ENCODE measurements at regions of chr14 and their contacts with region 1.

Region 1: GRCh38 chr14:54691525-54692283 is 124.8 kb downstream of the SAMD4A start:
- DNase-seq: peak; percentile 80
- H3K4me3 Mint-ChIP-seq: no peak overlapping the region
- H3K27ac Mint-ChIP-seq: no peak overlapping the region
- H3K4me1 Mint-ChIP-seq: peaks cover 15% of the 10 kb centered on the region
- H3K27me3 Mint-ChIP-seq: no peaks in the 10 kb centered on the region

Region 2: DNA sequence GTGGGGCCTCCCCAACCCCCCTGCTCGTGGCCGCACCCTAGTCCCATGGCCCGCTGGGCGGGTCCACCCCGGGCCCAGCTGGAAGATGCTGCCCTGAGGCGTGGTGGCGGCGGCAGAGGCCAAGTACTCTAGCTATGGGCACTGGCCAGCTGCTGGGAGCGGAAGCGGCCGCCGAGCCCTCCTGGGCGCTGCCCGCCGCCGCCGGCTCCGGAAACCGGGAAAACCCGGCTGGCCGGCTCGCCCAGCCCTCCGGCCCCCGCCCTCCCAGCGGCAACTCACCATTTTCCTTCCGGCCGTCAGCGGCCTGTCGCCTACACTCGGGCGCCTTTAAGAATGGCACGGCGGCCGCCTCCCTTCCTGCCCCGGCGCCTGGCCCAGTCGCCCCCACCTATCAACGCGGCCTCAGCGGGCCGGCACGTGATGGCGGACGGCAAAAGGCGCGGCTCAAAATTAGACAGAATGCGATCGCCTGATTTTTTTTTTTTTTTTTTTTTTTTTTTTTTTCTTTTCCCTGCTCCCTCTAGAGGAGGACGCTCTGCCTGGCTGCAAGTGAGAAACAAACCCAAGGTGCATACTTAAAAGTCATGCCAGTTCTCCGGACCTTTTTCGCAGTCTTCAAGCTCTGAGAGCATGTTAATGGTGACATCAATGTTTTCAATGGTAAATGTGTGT is 202.9 kb before region 1 on chr14 and contains the start of gene GMFB:
- CTCF ChIA-PET with region 1: no interaction called
- intact Hi-C with region 1: no loop called
- DNase-seq: peak; percentile 91
- H3K4me3 Mint-ChIP-seq: peak within 1 kb of the TSS; percentile 85
- H3K27ac Mint-ChIP-seq: peak within 1 kb of the TSS; percentile 88
- H3K4me1 Mint-ChIP-seq: peaks cover 54% of the 10 kb centered on the region
- H3K27me3 Mint-ChIP-seq: no peaks in the 10 kb centered on the region
- total RNA-seq, gene GMFB: 29.5 to 33.4 TPM

Region 3: GRCh38 chr14:54572316-54572715 is 119.4 kb before region 1 on chr14:
- CTCF ChIA-PET with region 1: interaction called, 17 read pairs
- intact Hi-C with region 1: loop called (anchors 1 kb)
- DNase-seq: peak; percentile 49
- H3K4me3 Mint-ChIP-seq: no peak overlapping the region
- H3K27ac Mint-ChIP-seq: no peak overlapping the region
- H3K4me1 Mint-ChIP-seq: peaks cover 19% of the 10 kb centered on the region
- H3K27me3 Mint-ChIP-seq: peaks cover 3% of the 10 kb centered on the region

Region 4: DNA sequence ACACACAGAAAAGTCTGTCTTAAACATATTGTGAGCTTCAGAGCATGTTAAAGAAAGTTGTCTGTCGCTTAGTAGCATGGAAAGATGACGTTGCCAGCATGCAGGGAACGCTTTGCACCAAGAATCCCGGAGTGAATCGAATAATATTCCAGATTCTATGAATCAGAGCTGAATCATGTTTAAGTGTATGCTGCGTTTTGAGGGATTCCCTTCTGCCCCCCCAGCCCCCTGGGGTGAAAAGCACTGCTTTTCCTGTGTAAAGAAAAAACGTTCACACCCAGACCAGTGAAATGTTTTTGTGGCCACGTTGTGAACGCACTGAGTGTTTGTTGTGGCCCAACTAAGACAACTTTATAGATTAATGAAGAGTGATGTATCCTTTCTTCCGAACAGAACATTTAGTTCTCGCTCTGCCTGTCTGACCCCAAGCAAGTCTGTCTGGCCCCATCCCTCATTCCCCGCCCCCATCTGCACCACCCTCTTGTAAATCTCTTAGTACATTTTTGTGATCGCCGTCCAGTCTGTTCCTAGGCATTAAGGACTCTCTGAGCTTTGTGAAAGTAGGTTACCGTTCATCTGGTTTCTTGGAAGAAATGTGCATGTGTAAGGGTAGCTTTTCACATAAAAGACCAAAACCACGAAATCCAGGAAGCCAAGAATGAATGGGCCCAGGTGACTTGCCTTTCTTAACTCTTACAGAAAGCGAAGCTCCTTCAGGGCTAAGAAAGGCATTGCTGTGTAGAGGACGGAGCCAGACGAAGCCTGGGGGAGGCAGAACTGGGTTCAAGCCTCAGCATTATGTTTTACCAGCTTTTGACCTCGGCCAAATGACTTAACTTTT is 21.8 kb before region 1 on chr14:
- CTCF ChIA-PET with region 1: interaction called, 9 read pairs
- intact Hi-C with region 1: loop called (anchors 2 kb)
- DNase-seq: peak; percentile 51
- H3K4me3 Mint-ChIP-seq: no peak overlapping the region
- H3K27ac Mint-ChIP-seq: no peak overlapping the region
- H3K4me1 Mint-ChIP-seq: peaks cover 30% of the 10 kb centered on the region
- H3K27me3 Mint-ChIP-seq: peaks cover 6% of the 10 kb centered on the region

Region 5: GRCh38 chr14:54722781-54723432 is 31.2 kb after region 1 on chr14:
- CTCF ChIA-PET with region 1: interaction called, 7 read pairs
- intact Hi-C with region 1: loop called (anchors 2 kb)
- DNase-seq: peak; percentile 47
- H3K4me3 Mint-ChIP-seq: no peak overlapping the region
- H3K27ac Mint-ChIP-seq: no peak overlapping the region
- H3K4me1 Mint-ChIP-seq: peaks cover 8% of the 10 kb centered on the region
- H3K27me3 Mint-ChIP-seq: peaks cover 5% of the 10 kb centered on the region

Region 6: DNA sequence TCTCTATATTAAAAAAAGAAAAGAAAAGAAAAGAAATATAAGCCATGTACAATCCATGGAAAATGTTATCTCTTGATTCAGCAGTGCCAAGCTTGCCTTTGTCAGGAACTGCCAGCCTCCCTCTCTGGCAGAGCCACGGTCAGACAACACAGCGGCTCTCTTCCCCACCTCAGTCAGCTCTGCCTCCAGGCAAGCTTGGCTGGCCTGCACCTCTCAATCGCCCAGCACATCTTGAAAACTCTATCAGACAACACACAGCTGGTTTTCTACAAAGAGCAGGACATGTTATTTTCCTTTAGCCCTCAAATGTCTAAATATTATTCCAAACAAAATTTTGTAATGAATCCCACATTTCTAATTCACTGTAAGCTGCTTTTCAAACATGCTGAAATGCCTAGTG is 230.9 kb after region 1 on chr14:
- CTCF ChIA-PET with region 1: no interaction called
- intact Hi-C with region 1: no loop called
- DNase-seq: no peak
- H3K4me3 Mint-ChIP-seq: no peak overlapping the region
- H3K27ac Mint-ChIP-seq: no peak overlapping the region
- H3K4me1 Mint-ChIP-seq: no peaks in the 10 kb centered on the region
- H3K27me3 Mint-ChIP-seq: no peaks in the 10 kb centered on the region

Region 7: DNA sequence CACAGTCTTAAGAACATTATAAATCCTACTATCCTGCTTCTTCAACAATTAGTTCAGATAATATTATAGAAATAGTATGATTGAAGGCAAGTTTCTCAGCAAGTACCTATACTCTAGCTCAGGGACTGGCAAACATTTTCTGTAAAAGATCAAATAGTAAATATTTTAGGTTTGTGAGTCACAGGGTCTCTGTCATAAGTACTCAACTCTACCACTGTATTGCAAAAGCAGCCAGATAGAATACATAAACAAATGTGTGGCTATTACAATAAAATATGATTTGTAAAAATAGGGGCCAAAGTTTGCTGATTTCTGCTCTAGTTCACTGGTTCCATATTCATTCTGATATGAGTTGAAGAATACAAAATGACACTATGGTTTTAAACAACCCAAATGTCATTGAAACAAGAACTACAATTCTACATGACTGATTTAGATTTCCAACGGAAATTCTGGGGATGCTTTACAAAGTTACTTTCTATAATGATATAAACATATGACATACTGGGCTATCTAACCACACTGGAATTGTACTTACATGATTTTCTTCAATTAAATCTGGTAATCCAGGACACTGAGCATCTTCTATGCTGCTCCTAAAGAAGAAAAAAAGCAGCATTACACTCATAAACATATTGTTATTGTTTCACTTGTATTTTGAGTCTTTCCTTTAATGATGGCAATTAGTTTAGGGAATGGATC is 460.5 kb after region 1 on chr14:
- CTCF ChIA-PET with region 1: no interaction called
- intact Hi-C with region 1: no loop called
- DNase-seq: no peak
- H3K4me3 Mint-ChIP-seq: no peak overlapping the region
- H3K27ac Mint-ChIP-seq: no peak overlapping the region
- H3K4me1 Mint-ChIP-seq: peaks cover 5% of the 10 kb centered on the region
- H3K27me3 Mint-ChIP-seq: no peaks in the 10 kb centered on the region

Region 8: GRCh38 chr14:55715889-55716288 is 1024.2 kb after region 1 on chr14:
- CTCF ChIA-PET with region 1: no interaction called
- intact Hi-C with region 1: no loop called
- DNase-seq: no peak
- H3K4me3 Mint-ChIP-seq: no peak overlapping the region
- H3K27ac Mint-ChIP-seq: no peak overlapping the region
- H3K4me1 Mint-ChIP-seq: no peaks in the 10 kb centered on the region
- H3K27me3 Mint-ChIP-seq: no peaks in the 10 kb centered on the region

Measured in activated naive CD4-positive, alpha-beta T cell treated with anti-CD3 and anti-CD28 coated beads for 36 hours (primary cell).